ENCODE measurements at regions of chr17 and their contacts with region 1.

Region 1: GRCh38 chr17:55492781-55493341 is 18.4 kb downstream of the SMIM36 start:
- DNase-seq: no peak
- H3K4me3 ChIP-seq: no peak overlapping the region
- H3K27ac ChIP-seq: no peak overlapping the region
- H3K4me1 ChIP-seq: no peaks in the 10 kb centered on the region
- H3K27me3 ChIP-seq: no peaks in the 10 kb centered on the region
- CTCF ChIP-seq: no peak
- POLR2A ChIP-seq: no peak

Region 2: GRCh38 chr17:55421179-55421934 is 71.5 kb before region 1 on chr17 and contains the start of gene MMD:
- intact Hi-C with region 1: loop called (anchors 5 kb)
- DNase-seq: peak; percentile 39
- H3K4me3 ChIP-seq: peak within 1 kb of the TSS; percentile 84 to 87
- H3K27ac ChIP-seq: peak within 1 kb of the TSS; percentile 84 to 85
- H3K4me1 ChIP-seq: no peaks in the 10 kb centered on the region
- H3K27me3 ChIP-seq: no peaks in the 10 kb centered on the region
- CTCF ChIP-seq: no peak
- POLR2A ChIP-seq: peak; percentile 12
- total RNA-seq, gene MMD: 8.7 to 55.0 TPM